HCT116 (cell line): ENCODE measurements at regions of chr5 and their contacts with region 1.

Region 1: GRCh38 chr5:139392678-139393496 is 2.0 kb downstream of the PROB1 start:
- DNase-seq: peak; percentile 66
- ATAC-seq: peak; percentile 82
- H3K4me3 ChIP-seq: peak overlapping the region; percentile 65 to 79
- H3K27ac ChIP-seq: peak overlapping the region; percentile 82
- H3K4me1 ChIP-seq: peaks cover 15 to 56% of the 10 kb centered on the region in 2 experiments
- H3K27me3 ChIP-seq: no peaks in the 10 kb centered on the region
- CTCF ChIP-seq: peak in 2 of 3 experiments; percentile 76 to 81; a peak in 4 of 6 replicates
- POLR2A ChIP-seq: peak; percentile 16
- RAD21 ChIP-seq: no peak

Region 2: DNA sequence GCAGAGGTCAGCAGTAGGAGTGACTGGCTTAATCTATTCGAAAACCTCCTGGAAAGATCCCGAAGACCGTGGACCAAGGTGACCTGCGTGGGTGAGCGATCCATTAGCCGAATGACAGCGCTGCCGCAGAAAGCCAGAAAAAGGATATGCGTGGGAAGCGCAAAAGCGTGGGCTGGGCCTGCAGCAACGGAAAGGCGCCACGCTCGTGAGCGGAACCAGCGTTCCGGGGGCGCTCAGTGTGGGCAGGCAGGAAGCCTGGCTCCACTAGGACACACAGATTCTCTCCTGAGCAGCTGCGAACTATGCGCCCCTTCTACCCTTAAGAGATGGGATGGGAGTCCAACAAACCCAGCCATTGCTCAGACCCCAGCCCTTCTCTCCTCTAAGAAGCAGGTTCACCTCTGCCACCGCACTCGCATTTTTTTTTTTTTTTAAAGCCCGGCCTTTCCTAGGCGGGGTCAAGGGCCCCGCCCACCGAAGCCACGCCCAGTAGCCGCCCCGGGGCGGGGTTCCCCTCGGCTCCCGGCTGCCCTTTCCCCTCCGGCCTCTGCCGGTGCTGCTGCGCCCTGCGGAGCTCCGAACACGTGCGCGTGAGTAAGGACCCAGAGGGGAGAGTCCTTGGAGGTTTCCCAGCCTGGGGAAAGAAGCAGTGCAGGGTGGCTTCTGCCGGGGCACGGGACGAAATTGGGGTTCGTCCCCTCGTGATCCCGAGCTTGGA is 119.2 kb before region 1 on chr5:
- CTCF ChIA-PET with region 1: interaction called, 4 read pairs
- POLR2A ChIA-PET with region 1: interaction called, 5 read pairs
- RAD21 ChIA-PET with region 1: no interaction called
- intact Hi-C with region 1: loop called (anchors 2 kb)
- DNase-seq: peak; percentile 74
- ATAC-seq: peak; percentile 76
- H3K4me3 ChIP-seq: peak overlapping the region; percentile 87 to 89
- H3K27ac ChIP-seq: peak overlapping the region; percentile 86
- H3K4me1 ChIP-seq: peaks cover 44 to 68% of the 10 kb centered on the region in 2 experiments
- H3K27me3 ChIP-seq: no peaks in the 10 kb centered on the region
- CTCF ChIP-seq: no peak
- POLR2A ChIP-seq: peak; percentile 95
- RAD21 ChIP-seq: no peak

Region 3: GRCh38 chr5:139341650-139342422 is 51.1 kb before region 1 on chr5 and contains the start of gene PAIP2:
- CTCF ChIA-PET with region 1: interaction called, 5 read pairs
- POLR2A ChIA-PET with region 1: interaction called, 3 read pairs
- RAD21 ChIA-PET with region 1: interaction called in 1 of 2 experiments, 5 read pairs
- intact Hi-C with region 1: loop called (anchors 1 kb)
- DNase-seq: peak; percentile 96
- ATAC-seq: peak; percentile 91
- H3K4me3 ChIP-seq: peak within 1 kb of the TSS; percentile 83 to 88
- H3K27ac ChIP-seq: peak within 1 kb of the TSS; percentile 96
- H3K4me1 ChIP-seq: peaks cover 4 to 16% of the 10 kb centered on the region in 2 experiments; a peak in 3 of 4 replicates
- H3K27me3 ChIP-seq: no peaks in the 10 kb centered on the region
- CTCF ChIP-seq: peak; percentile 62 to 75 (median 72); a peak in 5 of 6 replicates
- POLR2A ChIP-seq: peak; percentile 66
- RAD21 ChIP-seq: peak; percentile 75
- total RNA-seq, gene PAIP2: 108 TPM